BJ (cell line): ENCODE measurements at regions of chr7 and their contacts with region 1.

Region 1: GRCh38 chr7:29627631-29628030 is 64.0 kb downstream of the PRR15 start:
- DNase-seq: no peak
- H3K4me3 ChIP-seq: no peak overlapping the region
- H3K27me3 ChIP-seq: no peaks in the 10 kb centered on the region
- CTCF ChIP-seq: no peak

Region 2: DNA sequence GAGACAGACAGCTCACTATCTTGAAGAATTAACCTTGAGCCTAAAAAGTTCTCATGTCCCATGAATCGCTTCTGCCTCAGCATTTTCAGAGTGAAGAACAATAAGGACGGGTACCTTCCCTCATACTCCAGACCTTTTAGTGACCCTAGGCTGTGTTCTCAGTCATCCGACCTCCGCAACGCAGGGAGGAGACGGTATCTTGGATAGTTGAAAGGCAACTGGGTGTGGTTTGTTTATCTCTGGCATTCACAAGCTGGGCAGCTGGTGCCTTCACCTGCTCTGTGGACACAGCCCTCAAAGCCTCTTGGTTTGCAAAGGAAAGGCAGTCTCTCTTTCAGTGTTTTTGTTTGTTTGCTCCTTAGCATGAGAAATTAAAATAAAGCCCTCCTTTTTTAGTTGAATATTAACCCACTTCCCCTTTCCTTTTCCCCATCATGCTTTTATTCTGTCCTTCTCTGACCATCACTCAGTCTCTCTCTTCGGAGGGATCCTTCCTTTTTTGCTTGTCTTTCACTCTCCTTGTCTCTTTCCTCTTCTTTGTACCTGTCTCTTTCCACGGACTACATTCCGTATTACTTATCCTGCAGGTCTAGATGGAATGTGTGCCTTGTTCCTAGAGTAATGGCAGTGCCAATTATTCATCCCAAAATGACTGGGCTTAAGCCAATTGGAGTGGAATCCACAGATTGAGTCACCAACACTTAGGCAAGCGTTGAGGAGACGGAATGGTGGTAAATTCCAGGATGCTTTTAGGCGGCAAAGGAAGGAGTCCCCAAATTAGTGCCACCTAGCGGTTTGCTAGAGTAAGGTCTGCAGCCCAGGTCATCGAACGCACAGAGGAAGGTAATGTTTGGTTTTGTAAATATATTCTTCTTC is 18.2 kb before region 1 on chr7:
- CTCF ChIA-PET with region 1: no interaction called
- POLR2A ChIA-PET with region 1: no interaction called
- DNase-seq: no peak
- H3K4me3 ChIP-seq: no peak overlapping the region
- H3K27me3 ChIP-seq: no peaks in the 10 kb centered on the region
- CTCF ChIP-seq: peak; percentile 52

Region 3: DNA sequence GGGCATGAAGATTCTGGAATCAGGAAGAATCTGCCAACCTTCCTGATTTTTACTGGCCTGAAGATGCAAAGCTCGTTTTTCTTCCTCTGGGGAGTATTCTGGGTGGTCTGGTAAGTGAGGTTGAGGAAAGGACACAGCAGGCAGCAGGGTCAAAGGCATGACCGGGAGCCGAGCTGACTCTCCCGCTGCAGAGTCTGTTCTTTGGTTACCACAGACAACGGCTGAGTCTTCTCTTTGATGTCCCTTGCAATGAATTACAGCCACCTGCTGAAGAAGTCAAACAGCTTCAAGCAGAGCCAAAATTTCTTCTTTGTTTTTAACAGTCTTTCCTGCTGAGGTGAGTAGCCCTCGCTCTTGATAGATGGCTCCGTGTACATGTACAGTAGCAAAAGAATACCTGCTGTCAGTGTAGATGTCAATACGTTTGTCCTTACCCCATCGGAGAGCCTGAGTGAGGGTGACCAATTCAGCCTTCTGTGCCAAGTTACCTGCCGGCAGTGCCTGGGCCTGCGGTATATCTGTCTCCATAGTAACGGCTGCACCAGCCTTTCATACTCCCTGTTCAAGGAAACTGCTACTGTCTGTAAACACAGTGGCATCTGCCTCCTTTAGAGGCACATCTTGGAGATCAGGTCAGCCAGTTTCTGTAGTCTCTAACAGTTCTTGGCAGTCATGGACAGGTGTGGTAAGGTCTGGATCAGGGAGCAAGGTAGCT is 12.4 kb after region 1 on chr7:
- CTCF ChIA-PET with region 1: interaction called, 11 read pairs
- POLR2A ChIA-PET with region 1: no interaction called
- DNase-seq: no peak
- H3K4me3 ChIP-seq: no peak overlapping the region
- H3K27me3 ChIP-seq: no peaks in the 10 kb centered on the region
- CTCF ChIP-seq: no peak